Right lobe of liver (tissue), 6 donors: ENCODE measurements at regions of chr14 and their contacts with region 1.

Region 1: GRCh38 chr14:100440187-100440631 is 117.1 kb downstream of the SLC25A47 start:
- DNase-seq: peak; percentile 80 to 87 (median 85)
- ATAC-seq: peak; percentile 94 to 97 (median 96)
- H3K4me3 ChIP-seq: no peak overlapping the region
- H3K27ac ChIP-seq: peak overlapping the region in 1 of 3 donors; percentile 13
- H3K4me1 ChIP-seq: peaks cover 0 to 14% (median 0%) of the 10 kb centered on the region in 4 donors
- H3K27me3 ChIP-seq: no peaks in the 10 kb centered on the region
- CTCF ChIP-seq: peak; percentile 75 to 93 (median 86)
- POLR2A ChIP-seq: no peak

Region 2: DNA sequence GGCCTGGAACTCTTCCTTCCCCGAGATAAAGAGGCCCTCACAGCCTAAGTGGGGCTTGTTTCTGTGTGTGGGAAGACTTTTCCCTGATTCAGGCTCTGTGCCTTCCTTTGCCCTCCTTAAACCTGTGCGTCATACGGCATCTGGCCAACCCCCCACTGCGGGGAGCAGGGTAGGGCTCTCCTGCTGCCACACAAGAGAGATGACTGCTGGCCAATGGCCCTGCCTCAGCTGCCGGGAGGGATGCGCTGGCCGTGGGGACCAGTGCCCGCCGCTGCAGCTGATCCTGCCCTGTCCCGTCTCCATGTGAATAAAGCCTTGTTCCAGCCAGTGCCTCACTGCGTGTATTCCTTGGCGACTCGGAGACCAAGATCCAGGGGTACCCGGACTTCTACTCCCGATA is 189.5 kb after region 1 on chr14:
- intact Hi-C with region 1: loop called in 1 of 2 experiments (anchors 10 kb)
- DNase-seq: no peak
- ATAC-seq: no peak
- H3K4me3 ChIP-seq: no peak overlapping the region
- H3K27ac ChIP-seq: no peak overlapping the region
- H3K4me1 ChIP-seq: no peaks in the 10 kb centered on the region
- H3K27me3 ChIP-seq: no peaks in the 10 kb centered on the region
- CTCF ChIP-seq: no peak
- POLR2A ChIP-seq: no peak